ENCODE measurements at regions of chr15 and their contacts with region 1.

Region 1: GRCh38 chr15:74635228-74635627 is 19.6 kb downstream of the CLK3 start:
- H3K4me3 ChIP-seq: no peak overlapping the region
- H3K27ac ChIP-seq: no peak overlapping the region
- H3K4me1 ChIP-seq: no peaks in the 10 kb centered on the region
- CTCF ChIP-seq: peak; percentile 94

Region 2: DNA sequence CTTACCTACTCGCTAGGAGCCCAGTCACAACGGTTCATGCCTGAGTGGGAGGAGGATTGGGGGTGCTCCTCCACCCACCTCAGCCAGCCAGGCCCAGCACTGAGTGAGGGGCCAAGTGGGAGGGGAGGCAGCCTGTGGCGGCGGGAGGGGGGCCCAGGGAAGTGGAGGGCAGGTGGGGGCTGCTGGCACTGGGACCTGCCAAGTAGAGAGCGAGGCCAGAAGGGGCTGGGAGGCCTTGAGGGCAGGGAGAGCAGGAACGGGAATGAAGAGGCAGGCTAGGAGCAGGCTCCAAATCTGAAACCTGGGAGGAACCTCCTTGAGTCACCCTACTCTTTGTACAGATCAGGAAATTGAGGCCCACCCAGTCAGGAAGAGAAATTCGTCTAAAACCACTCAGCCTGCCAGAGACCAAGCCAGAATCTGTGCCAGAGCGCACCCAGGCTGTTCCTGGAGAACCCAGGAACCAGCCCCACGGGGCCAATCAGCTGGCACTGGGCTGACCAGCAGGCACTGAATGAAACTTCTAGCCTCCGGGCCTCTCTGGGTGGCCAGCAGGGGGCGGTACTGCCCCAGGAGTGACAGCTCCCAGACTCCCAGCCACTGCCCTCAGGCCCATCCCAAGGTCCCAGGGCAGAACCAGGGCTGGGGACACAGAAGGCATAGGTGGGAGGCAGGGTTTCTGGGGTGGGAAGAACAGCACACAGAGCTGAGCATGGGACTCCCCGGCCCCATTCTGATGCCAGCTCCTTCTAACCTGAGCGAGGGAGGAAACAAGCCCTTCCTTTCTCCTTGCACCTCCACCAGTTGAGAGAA is 253.0 kb before region 1 on chr15:
- CTCF ChIA-PET with region 1: interaction called, 100 read pairs
- POLR2A ChIA-PET with region 1: no interaction called
- H3K4me3 ChIP-seq: no peak overlapping the region
- H3K27ac ChIP-seq: no peak overlapping the region
- H3K4me1 ChIP-seq: no peaks in the 10 kb centered on the region
- CTCF ChIP-seq: peak; percentile 95

Region 3: DNA sequence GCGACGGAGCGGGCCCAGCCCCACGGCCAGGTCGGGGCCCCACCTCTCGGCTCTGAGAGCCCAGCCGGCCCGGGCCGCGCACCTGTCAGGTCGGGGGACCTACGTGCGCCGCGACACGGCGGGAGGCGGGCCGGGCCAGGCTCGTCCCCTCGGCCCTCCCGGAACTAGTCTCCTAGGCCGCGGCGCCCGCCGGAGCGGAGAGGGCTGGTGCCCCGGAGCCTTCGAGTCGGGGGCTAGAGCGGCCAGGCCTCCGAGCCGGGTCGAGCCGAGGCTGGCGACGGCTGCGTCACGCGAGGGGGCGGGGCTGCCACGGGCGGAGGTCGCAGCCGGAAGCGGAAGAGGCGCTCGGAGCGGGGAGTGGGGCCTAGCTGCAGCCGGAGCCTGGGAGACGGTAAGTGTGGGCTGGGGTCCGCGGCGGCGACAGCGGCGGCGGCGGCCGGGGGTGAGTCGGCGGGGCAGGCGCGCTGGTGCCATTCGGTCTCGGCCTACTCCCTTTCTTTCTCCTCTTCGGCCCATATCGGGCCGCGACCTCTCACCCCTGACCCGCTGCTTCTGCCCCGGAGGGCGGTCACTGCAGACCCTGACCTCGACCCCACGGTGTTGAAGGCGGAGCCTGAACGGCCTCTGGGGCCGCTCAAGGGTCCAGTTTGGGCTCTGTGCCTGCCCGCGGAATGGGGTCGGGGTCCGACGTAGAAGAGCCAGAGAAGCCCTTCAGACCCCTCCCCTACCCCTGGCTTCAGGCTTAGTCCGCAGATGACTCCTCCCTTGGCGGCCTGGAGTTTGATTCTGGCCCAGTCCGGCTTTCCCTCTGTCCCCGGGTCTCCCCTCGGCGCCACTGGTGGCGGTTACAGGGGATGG is 19.5 kb before region 1 on chr15 and contains the start of gene CLK3:
- CTCF ChIA-PET with region 1: interaction called, 220 read pairs
- POLR2A ChIA-PET with region 1: interaction called, 4 read pairs
- H3K4me3 ChIP-seq: peak within 1 kb of the TSS; percentile 85
- H3K27ac ChIP-seq: peak within 1 kb of the TSS; percentile 95
- H3K4me1 ChIP-seq: peaks cover 9% of the 10 kb centered on the region
- CTCF ChIP-seq: no peak

Region 4: GRCh38 chr15:74781431-74782258 is 146.4 kb after region 1 on chr15 and contains the start of gene CSK:
- CTCF ChIA-PET with region 1: interaction called, 25 read pairs
- POLR2A ChIA-PET with region 1: interaction called, 5 read pairs
- H3K4me3 ChIP-seq: peak within 1 kb of the TSS; percentile 60
- H3K27ac ChIP-seq: peak within 1 kb of the TSS; percentile 95
- H3K4me1 ChIP-seq: peaks cover 27% of the 10 kb centered on the region
- CTCF ChIP-seq: no peak

Region 5: GRCh38 chr15:74950078-74951000 is 315.1 kb after region 1 on chr15:
- CTCF ChIA-PET with region 1: interaction called, 12 read pairs
- POLR2A ChIA-PET with region 1: no interaction called
- H3K4me3 ChIP-seq: no peak overlapping the region
- H3K27ac ChIP-seq: no peak overlapping the region
- H3K4me1 ChIP-seq: peaks cover 4% of the 10 kb centered on the region; the same call in 1 of the 2 replicates
- CTCF ChIP-seq: peak; percentile 97

Region 6: GRCh38 chr15:74995779-74996765 is 360.8 kb after region 1 on chr15:
- CTCF ChIA-PET with region 1: no interaction called
- POLR2A ChIA-PET with region 1: no interaction called
- H3K4me3 ChIP-seq: peak overlapping the region; percentile 69
- H3K27ac ChIP-seq: no peak overlapping the region
- H3K4me1 ChIP-seq: no peaks in the 10 kb centered on the region; the same call in 1 of the 2 replicates
- CTCF ChIP-seq: no peak

Measured in HEK293 (cell line).